ENCODE measurements at regions of chr15 and their contacts with region 1.

Region 1: GRCh38 chr15:41230650-41231533 is at the starts of genes CHP1 and EXD1:
- DNase-seq: peak; percentile 84
- H3K4me3 ChIP-seq: peak within 1 kb of the TSS; percentile 90
- H3K27me3 ChIP-seq: no peaks in the 10 kb centered on the region
- CTCF ChIP-seq: peak; percentile 99
- polyA plus RNA-seq, gene CHP1: 59.9 and 67.2 TPM in 2 replicates
- polyA plus RNA-seq, gene EXD1: not detected in 2 replicates

Region 2: GRCh38 chr15:40982855-40983254 is 248.0 kb before region 1 on chr15:
- CTCF ChIA-PET with region 1: no interaction called
- POLR2A ChIA-PET with region 1: interaction called, 20 read pairs
- DNase-seq: peak; percentile 81
- H3K4me3 ChIP-seq: no peak overlapping the region
- H3K27me3 ChIP-seq: no peaks in the 10 kb centered on the region
- CTCF ChIP-seq: no peak

Region 3: GRCh38 chr15:41207687-41208448 is 23.0 kb before region 1 on chr15:
- CTCF ChIA-PET with region 1: interaction called, 10 read pairs
- POLR2A ChIA-PET with region 1: no interaction called
- DNase-seq: no peak
- H3K4me3 ChIP-seq: no peak overlapping the region
- H3K27me3 ChIP-seq: no peaks in the 10 kb centered on the region; the same call in 1 of the 2 replicates
- CTCF ChIP-seq: no peak

Measured in BJ (cell line).